ENCODE measurements at regions of chr20 and their contacts with region 1.

Region 1: GRCh38 chr20:11890331-11891080 is 27.2 kb upstream of the BTBD3 start:
- DNase-seq: peak; percentile 92 to 97 (median 95)
- H3K4me3 ChIP-seq: peak overlapping the region; percentile 52 to 92 (median 77)
- H3K27ac ChIP-seq: peak overlapping the region in 58 of 59 donors; percentile 83 to 99 (median 95)
- H3K27me3 ChIP-seq: no peaks in the 10 kb centered on the region
- CTCF ChIP-seq: peak in 9 of 56 donors; percentile 4 to 28 (median 9)

Region 2: DNA sequence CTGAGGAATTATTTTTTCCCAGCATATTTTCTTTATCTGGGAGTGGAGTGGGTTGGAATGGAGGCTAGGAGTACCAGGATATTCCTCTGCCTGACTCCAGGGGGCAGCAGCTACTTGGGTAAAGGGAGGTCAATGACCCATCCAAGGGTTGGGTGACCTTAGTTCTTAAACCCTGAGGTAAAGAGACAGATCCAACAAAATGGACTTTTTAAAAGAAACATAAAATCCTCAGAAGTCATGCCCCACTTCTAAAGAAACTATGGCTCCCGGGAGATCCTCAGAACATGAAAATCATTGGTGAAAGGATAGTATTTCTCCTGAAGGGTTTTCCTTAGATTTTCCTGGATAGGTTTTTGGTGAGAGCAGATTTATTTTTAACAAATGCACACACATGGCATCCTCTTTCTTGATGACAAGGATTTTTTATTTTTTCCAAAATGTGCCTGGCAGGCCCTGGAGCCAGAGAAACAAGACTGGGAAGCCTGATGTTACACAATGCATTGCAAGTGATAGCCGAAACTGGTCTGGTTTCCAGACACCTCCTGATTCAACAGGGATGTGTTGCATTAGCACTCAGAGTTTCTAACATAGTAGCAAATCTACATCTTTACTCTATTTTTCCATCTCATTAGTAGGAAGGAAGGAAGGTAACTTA is 213.7 kb before region 1 on chr20:
- intact Hi-C with region 1: loop called in 1 of 2 experiments (anchors 10 kb)
- DNase-seq: peak in 4 of 10 donors; percentile 24 to 65 (median 50)
- H3K4me3 ChIP-seq: no peak overlapping the region
- H3K27ac ChIP-seq: peak overlapping the region in 5 of 59 donors; percentile 3 to 61 (median 39)
- H3K27me3 ChIP-seq: no peaks in the 10 kb centered on the region
- CTCF ChIP-seq: peak; percentile 52 to 88 (median 74)

Region 3: DNA sequence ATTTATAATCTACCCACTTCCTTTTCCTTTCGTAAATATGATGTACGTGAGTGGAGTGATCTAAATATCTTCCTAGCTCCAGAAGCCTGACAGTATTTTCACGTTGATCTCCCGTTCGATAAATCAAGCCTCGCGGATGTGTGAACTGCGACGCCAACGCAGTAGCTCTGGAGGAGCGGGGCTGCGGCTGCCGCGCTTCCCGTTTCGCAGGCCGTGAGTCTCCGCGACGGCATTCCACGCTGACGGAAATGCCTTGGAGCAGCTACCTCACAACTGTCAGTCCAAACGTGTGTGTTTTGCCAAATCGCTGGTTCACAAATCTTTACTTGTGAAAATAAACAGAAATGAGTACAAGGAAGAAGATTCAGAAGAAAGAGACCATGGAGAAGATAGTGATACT is 68.3 kb after region 1 on chr20:
- intact Hi-C with region 1: no loop called
- DNase-seq: no peak
- H3K4me3 ChIP-seq: no peak overlapping the region
- H3K27ac ChIP-seq: no peak overlapping the region
- H3K27me3 ChIP-seq: no peaks in the 10 kb centered on the region
- CTCF ChIP-seq: no peak

Region 4: GRCh38 chr20:11993886-11994461 is 103.5 kb after region 1 on chr20:
- intact Hi-C with region 1: loop called (anchors 5 to 10 kb)
- DNase-seq: no peak
- H3K4me3 ChIP-seq: no peak overlapping the region
- H3K27ac ChIP-seq: peak overlapping the region in 56 of 59 donors; percentile 2 to 98 (median 92)
- H3K27me3 ChIP-seq: no peaks in the 10 kb centered on the region
- CTCF ChIP-seq: no peak

Region 5: GRCh38 chr20:12327205-12327604 is 436.7 kb after region 1 on chr20:
- intact Hi-C with region 1: loop called in 1 of 2 experiments (anchors 10 kb)
- DNase-seq: no peak
- H3K4me3 ChIP-seq: no peak overlapping the region
- H3K27ac ChIP-seq: no peak overlapping the region
- H3K27me3 ChIP-seq: no peaks in the 10 kb centered on the region
- CTCF ChIP-seq: no peak

Measured in dorsolateral prefrontal cortex (tissue), 120 donors.